Heart right ventricle (tissue), 16 donors: ENCODE measurements at regions of chr22 and their contacts with region 1.

Region 1: DNA sequence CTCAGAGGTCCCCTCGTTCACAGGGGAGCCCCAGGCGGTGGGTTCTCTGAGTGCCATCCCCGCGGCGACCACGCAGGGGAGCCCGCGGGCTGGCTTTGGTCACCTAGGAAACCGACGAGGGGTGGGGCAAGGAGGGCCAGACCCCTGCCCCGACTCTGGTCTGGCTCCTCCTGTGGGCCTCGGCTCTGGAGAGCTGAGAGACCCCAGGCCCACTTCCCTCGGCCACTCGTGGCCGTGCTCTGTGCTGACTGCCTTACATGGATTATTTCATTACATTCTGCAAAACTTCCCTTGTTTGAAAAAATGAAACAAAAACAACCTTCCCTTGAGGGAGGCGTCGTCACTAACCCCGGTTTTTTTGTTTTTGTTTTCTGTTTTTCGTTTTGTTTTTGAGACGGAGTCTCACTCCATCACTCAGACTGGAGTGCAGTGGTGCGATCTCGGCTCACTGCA is 15.1 kb upstream of the CYTH4 start:
- DNase-seq: peak in 1 of 2 donors; percentile 53
- ATAC-seq: peak; percentile 54 to 77 (median 68)
- H3K4me3 ChIP-seq: peak overlapping the region in 9 of 10 donors; percentile 5 to 62 (median 41)
- H3K27ac ChIP-seq: peak overlapping the region in 4 of 10 donors; percentile 4 to 93 (median 40)
- H3K4me1 ChIP-seq: peaks cover 0 to 52% (median 0%) of the 10 kb centered on the region in 9 donors
- H3K27me3 ChIP-seq: peaks cover 0 to 49% (median 25%) of the 10 kb centered on the region in 7 donors
- CTCF ChIP-seq: peak; percentile 33 to 90 (median 69)

Region 2: GRCh38 chr22:36991206-36991605 is 276.0 kb before region 1 on chr22:
- intact Hi-C with region 1: no loop called
- DNase-seq: no peak
- ATAC-seq: no peak
- H3K4me3 ChIP-seq: no peak overlapping the region
- H3K27ac ChIP-seq: no peak overlapping the region
- H3K4me1 ChIP-seq: no peaks in the 10 kb centered on the region
- H3K27me3 ChIP-seq: peaks cover 0 to 51% (median 36%) of the 10 kb centered on the region in 7 donors
- CTCF ChIP-seq: no peak

Region 3: DNA sequence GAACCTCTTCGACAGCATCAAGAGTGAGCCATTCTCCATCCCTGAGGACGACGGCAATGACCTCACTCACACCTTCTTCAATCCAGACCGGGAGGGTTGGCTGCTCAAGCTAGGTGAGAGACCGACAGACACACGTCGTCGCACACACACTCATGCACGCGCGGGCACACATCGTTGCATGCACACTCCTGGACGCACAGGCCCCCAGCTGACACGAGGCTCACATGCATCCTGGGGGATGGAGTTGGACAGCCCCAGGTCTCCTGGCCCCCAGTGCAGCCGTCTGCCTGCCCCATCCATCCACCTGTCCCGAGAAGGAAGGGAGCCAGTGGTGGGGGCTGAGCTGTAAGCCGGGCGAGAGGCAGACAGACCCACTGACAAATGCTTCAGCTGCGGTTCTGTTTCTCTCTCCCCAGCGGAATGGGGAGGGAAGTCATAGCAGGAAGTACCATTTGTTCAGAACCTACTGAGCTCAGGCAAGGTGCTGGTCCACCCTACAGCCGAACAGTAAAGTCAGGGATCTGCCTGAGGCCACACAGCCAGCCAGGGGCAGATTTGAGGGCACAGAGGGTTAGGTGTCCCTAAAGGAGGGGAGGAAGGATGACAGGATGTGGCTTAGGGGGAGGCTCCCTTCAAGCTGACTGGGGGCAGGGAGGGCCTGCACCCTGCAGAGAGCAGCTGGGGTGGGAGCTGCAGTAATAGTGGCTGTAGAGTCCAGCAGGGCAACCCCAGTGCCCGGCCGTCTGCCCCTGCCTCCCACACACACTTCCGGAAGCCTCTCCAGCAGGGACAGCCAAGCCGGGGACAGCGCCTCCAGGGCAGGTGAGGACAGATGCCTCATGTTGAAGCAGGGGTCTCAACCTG is 42.3 kb after region 1 on chr22:
- intact Hi-C with region 1: loop called in 1 of 10 experiments (anchors 5 kb)
- DNase-seq: no peak
- ATAC-seq: no peak
- H3K4me3 ChIP-seq: peak overlapping the region in 1 of 10 donors; percentile 3
- H3K27ac ChIP-seq: peak overlapping the region in 2 of 10 donors; percentile 40 to 80
- H3K4me1 ChIP-seq: peaks cover 5 to 92% (median 23%) of the 10 kb centered on the region in 9 donors
- H3K27me3 ChIP-seq: peaks cover 0 to 4% (median 0%) of the 10 kb centered on the region in 7 donors
- CTCF ChIP-seq: no peak

Region 4: GRCh38 chr22:37428649-37429586 is 161.8 kb after region 1 on chr22:
- intact Hi-C with region 1: loop called in 1 of 10 experiments (anchors 5 kb)
- DNase-seq: peak in 1 of 2 donors; percentile 45
- ATAC-seq: peak in 2 of 8 donors; percentile 10 to 40
- H3K4me3 ChIP-seq: no peak overlapping the region
- H3K27ac ChIP-seq: no peak overlapping the region
- H3K4me1 ChIP-seq: peaks cover 0 to 12% (median 5%) of the 10 kb centered on the region in 9 donors
- H3K27me3 ChIP-seq: peaks cover 34 to 100% (median 98%) of the 10 kb centered on the region in 7 donors
- CTCF ChIP-seq: peak; percentile 27 to 71 (median 59)

Region 5: GRCh38 chr22:37457093-37457893 is 190.1 kb after region 1 on chr22:
- intact Hi-C with region 1: loop called in 3 of 10 experiments (anchors 5 to 10 kb)
- DNase-seq: peak; percentile 61
- ATAC-seq: peak; percentile 58 to 88 (median 81)
- H3K4me3 ChIP-seq: no peak overlapping the region
- H3K27ac ChIP-seq: no peak overlapping the region
- H3K4me1 ChIP-seq: peaks cover 0 to 5% (median 0%) of the 10 kb centered on the region in 9 donors
- H3K27me3 ChIP-seq: peaks cover 5 to 77% (median 27%) of the 10 kb centered on the region in 7 donors
- CTCF ChIP-seq: peak; percentile 62 to 93 (median 83)

Region 6: DNA sequence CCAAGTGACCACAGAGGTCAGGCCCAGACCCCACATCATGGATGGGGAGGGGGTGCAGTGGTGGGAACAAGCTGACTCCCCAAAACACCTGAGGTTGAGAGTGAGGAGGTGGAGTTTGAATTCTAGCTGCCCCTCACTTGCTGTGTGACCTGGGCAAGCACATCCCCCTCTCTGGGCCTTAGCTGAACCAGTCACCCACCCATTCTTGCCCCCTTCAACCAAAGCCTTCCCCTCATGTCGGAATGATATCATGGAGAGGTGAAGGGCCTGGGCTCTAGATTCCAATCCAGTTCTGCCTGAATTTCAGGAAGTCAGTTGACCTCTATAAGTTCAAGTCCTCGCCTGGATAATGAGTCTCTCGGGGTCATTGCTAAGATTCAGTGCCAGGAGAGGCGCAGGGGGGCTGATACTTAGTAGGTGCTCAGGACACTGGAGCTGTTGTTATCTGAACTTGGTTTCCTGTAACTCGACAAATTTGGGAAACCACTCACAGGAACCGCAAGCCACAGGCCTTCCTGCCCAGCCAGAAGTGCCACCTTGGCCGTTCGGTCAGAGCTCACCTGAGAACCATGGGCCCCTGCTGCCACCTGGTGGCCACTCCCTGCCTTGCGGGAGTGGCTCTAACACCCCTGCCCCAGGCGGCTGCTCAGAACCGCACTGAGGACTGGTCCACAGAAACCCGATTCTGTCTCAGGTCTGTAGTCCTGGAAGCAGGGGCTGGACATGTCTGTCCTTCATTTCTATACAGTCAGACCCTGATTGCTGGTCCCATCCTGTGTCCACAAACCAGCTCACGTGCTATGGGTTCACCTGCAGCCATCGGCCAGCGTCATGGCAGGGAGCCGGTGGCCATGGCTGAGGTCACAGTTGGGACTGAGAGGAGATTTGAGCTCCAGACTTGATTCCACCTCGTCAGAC is 300.0 kb after region 1 on chr22:
- intact Hi-C with region 1: no loop called
- DNase-seq: peak; percentile 79 to 84
- ATAC-seq: peak; percentile 36 to 81 (median 60)
- H3K4me3 ChIP-seq: no peak overlapping the region
- H3K27ac ChIP-seq: peak overlapping the region in 9 of 10 donors; percentile 17 to 100 (median 96)
- H3K4me1 ChIP-seq: peaks cover 23 to 85% (median 62%) of the 10 kb centered on the region in 9 donors
- H3K27me3 ChIP-seq: peaks cover 0 to 11% (median 0%) of the 10 kb centered on the region in 7 donors
- CTCF ChIP-seq: peak; percentile 87 to 96 (median 94)